Mammary epithelial cell (primary cell): ENCODE measurements at regions of chr12 and their contacts with region 1.

Region 1: DNA sequence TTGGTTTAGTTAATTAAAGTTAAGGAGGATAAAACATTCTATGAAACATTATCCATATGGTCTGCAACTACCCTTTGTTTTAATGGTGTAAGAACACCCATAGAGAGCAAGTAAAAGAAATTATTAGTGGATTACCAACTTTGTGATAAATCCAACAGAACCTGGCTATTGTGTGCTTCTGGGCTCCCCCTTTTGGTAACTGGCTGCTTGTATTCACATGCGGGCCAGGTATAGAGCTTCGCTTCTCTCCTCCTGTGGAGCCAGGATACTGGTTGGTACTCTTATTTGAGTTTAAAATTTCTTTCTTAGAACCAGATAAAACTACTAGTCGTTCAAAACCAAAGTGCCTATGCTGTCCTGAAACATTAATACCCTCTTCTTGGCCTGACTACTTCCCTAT is 81.0 kb downstream of the PTPRR start:
- DNase-seq: no peak
- H3K4me3 ChIP-seq: no peak overlapping the region
- H3K27ac ChIP-seq: no peak overlapping the region
- H3K4me1 ChIP-seq: no peaks in the 10 kb centered on the region
- H3K27me3 ChIP-seq: peaks cover 2% of the 10 kb centered on the region
- CTCF ChIP-seq: peak in 1 of 2 donors; percentile 18

Region 2: DNA sequence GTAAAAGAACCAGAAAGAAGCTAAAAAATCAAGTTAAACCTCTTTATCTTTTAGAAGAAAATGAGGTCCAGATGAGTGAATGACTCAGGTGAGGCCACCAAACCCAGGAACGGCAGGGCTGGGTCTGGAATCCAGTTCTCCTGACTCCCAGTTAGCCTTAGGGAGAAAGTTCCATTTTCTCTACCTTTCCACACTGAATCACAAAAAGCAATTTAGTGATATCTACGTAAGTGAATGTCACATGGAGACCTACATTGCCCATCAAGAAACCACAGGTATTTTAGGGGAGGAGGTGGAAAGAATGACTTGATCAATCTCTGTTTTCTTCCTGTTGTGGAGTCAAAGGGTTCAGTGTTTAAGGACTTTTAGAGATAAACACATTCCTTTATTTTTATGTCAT is 95.4 kb before region 1 on chr12:
- CTCF ChIA-PET with region 1: no interaction called
- dilution Hi-C with region 1: loop called (anchors 5 kb)
- in situ Hi-C with region 1: loop called in 1 of 2 experiments (anchors 10 kb)
- intact Hi-C with region 1: no loop called
- DNase-seq: peak; percentile 80
- H3K4me3 ChIP-seq: no peak overlapping the region
- H3K27ac ChIP-seq: no peak overlapping the region
- H3K4me1 ChIP-seq: peaks cover 8% of the 10 kb centered on the region
- H3K27me3 ChIP-seq: peaks cover 3% of the 10 kb centered on the region
- CTCF ChIP-seq: no peak

Region 3: GRCh38 chr12:70936203-70936813 is 96.8 kb after region 1 on chr12:
- CTCF ChIA-PET with region 1: no interaction called
- dilution Hi-C with region 1: loop called (anchors 5 kb)
- in situ Hi-C with region 1: no loop called
- intact Hi-C with region 1: no loop called
- DNase-seq: no peak
- H3K4me3 ChIP-seq: no peak overlapping the region
- H3K27ac ChIP-seq: no peak overlapping the region
- H3K4me1 ChIP-seq: no peaks in the 10 kb centered on the region
- H3K27me3 ChIP-seq: peaks cover 2% of the 10 kb centered on the region
- CTCF ChIP-seq: no peak

Region 4: GRCh38 chr12:70971001-70971794 is 131.7 kb after region 1 on chr12:
- CTCF ChIA-PET with region 1: no interaction called
- dilution Hi-C with region 1: no loop called
- in situ Hi-C with region 1: no loop called
- intact Hi-C with region 1: no loop called
- DNase-seq: no peak
- H3K4me3 ChIP-seq: no peak overlapping the region
- H3K27ac ChIP-seq: no peak overlapping the region
- H3K4me1 ChIP-seq: no peaks in the 10 kb centered on the region
- H3K27me3 ChIP-seq: no peaks in the 10 kb centered on the region
- CTCF ChIP-seq: no peak